HEK293 (cell line): ENCODE measurements at regions of chr3 and their contacts with region 1.

Region 1: GRCh38 chr3:59857589-59858346 is 807.9 kb upstream of the CFAP20DC start:
- H3K4me3 ChIP-seq: no peak overlapping the region
- H3K27ac ChIP-seq: no peak overlapping the region
- H3K4me1 ChIP-seq: no peaks in the 10 kb centered on the region
- CTCF ChIP-seq: peak; percentile 54

Region 2: DNA sequence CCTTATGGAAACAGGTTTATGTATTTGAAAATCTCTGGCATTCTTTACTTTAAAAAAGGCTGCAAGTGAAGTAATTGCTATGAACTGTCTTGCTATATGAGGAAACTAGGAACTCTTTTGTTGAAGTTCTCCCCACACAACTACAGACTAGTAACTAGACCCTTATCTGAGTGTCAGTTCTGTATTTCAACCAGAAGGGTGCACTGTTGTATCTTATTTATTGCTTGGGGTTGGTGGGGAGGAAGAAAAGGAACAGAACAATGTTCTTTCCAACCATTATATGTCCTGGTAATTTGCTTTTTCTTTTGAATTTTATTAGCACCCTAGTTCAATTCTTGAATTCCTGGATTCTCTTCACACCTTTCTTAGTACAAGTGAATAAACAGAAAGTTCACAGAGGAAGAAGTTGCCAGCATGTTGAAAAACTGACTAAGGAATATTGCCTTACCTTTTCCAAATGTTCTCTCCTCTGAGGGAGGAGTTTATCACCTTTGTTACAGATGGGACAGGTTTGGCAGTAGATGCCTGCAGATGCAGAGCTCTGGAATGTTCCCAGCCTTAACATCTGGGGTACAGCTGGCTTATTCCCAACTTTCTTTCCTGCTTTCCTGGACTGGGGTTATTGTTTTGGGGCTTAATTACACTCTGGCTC is 645.5 kb before region 1 on chr3:
- CTCF ChIA-PET with region 1: interaction called, 11 read pairs
- POLR2A ChIA-PET with region 1: no interaction called
- H3K4me3 ChIP-seq: no peak overlapping the region
- H3K27ac ChIP-seq: no peak overlapping the region
- H3K4me1 ChIP-seq: no peaks in the 10 kb centered on the region
- CTCF ChIP-seq: no peak

Region 3: DNA sequence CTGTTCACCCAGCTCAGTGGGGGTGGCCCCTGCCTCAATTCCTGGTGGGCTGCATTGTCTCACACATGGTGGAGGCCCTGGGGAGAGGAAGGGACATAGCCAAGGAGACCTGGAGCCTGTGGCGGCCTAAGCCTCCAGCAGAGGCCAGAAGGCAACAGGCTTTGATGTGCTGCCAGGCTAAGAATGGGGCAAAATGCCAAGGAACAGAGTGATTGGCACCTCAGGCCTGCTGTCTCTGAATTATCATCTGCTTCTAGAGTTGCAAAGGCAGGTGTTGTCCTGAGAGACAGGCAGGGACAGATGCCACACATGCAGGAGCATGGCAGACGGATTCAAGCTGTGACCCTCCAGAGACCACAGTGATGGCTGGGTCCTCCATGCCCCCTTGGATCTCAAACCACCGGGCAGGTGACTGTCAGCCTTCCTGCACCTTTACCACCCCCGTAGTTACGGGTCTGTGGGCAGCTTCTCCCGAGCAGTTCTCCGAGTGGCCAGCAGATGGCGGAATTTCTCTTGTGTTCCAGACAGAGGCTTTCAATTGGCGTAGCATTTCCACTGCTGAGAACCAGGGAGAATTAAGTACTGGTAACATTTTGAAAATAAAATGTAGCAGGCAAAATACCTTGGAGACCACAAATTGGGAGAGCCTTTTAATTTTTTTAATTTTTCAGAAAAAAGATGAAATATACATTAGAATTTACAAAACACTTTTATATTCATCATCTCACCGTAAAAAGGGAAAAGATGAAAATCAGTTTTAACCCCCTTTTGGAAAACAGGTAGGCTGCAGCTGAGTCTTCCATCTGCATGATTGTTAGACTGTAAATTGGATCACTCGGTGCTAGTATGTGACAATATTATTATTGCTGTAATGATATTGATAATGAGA is 282.4 kb before region 1 on chr3:
- CTCF ChIA-PET with region 1: interaction called, 12 read pairs
- POLR2A ChIA-PET with region 1: no interaction called
- H3K4me3 ChIP-seq: no peak overlapping the region
- H3K27ac ChIP-seq: no peak overlapping the region
- H3K4me1 ChIP-seq: no peaks in the 10 kb centered on the region
- CTCF ChIP-seq: no peak; the same call in 1 of the 2 replicates

Region 4: GRCh38 chr3:59885101-59885500 is 27.3 kb after region 1 on chr3:
- CTCF ChIA-PET with region 1: no interaction called
- POLR2A ChIA-PET with region 1: no interaction called
- H3K4me3 ChIP-seq: no peak overlapping the region
- H3K27ac ChIP-seq: no peak overlapping the region
- H3K4me1 ChIP-seq: no peaks in the 10 kb centered on the region
- CTCF ChIP-seq: no peak